Ascending aorta (tissue), 2 donors: ENCODE measurements at regions of chr6 and their contacts with region 1.

Region 1: DNA sequence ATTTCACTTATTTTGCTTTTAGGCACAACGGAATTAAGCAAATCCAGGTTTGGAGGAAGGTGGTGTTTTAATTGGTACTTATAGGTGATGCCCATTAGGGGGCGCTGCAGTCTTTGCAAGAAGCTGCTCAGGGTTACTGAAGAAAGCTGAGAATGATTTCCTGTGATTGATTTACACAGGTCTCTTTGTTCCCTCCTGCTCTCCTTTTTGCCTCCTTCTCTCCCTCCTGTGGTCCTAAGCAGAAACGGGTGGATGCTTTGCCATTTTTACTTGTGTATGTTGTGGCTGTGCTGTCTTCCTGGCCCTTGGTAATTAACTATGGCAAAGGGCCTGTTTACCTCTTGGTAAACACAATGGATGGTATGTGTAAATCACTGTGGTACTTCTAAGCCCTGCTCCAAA is 97.8 kb downstream of the ANKS1A start:
- DNase-seq: peak in 1 of 2 donors; percentile 84
- H3K4me3 ChIP-seq: no peak overlapping the region
- H3K27ac ChIP-seq: peak overlapping the region in 1 of 2 donors; percentile 60
- H3K4me1 ChIP-seq: peaks cover 5 to 6% of the 10 kb centered on the region in 2 donors
- H3K27me3 ChIP-seq: no peaks in the 10 kb centered on the region
- CTCF ChIP-seq: peak; percentile 73 to 88 (median 81)

Region 2: GRCh38 chr6:34514593-34515472 is 472.0 kb before region 1 on chr6:
- intact Hi-C with region 1: no loop called
- DNase-seq: no peak
- H3K4me3 ChIP-seq: no peak overlapping the region
- H3K27ac ChIP-seq: no peak overlapping the region
- H3K4me1 ChIP-seq: no peaks in the 10 kb centered on the region
- H3K27me3 ChIP-seq: no peaks in the 10 kb centered on the region
- CTCF ChIP-seq: no peak

Region 3: GRCh38 chr6:35048631-35049083 is 61.8 kb after region 1 on chr6:
- intact Hi-C with region 1: loop called (anchors 1 kb)
- DNase-seq: peak in 1 of 2 donors; percentile 40
- H3K4me3 ChIP-seq: peak overlapping the region; percentile 23 to 31
- H3K27ac ChIP-seq: peak overlapping the region; percentile 87 to 89
- H3K4me1 ChIP-seq: peaks cover 59 to 93% of the 10 kb centered on the region in 2 donors
- H3K27me3 ChIP-seq: no peaks in the 10 kb centered on the region
- CTCF ChIP-seq: peak in 2 of 3 experiments; percentile 30 to 56

Region 4: DNA sequence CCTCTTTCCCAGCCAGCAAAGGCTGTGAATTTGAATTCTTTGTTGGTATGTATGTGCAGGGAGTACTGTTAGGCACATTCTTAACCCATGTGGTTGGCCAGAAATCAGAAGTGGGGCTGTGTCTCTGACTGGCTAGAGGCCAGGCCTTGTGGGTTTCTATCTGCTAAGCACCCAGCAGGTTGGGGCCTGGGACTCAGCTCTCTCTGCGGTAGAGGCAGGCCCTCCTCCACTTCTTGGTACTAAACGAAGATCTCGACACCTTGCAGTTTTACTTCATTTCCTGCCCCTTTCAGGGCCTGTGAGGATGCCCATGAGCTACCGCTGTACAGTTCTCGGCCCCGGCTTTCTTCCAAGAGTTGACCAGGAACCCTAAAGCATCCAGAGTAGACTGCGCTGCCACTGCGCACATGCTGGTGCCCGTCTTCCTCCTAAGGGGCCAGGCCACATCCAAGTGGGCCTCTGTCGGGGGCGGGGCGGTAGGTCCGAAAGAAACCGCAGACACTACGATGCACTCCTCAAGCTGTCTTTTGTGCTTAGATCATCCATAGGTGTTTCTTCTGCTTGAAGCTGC is 103.2 kb after region 1 on chr6:
- intact Hi-C with region 1: loop called (anchors 5 kb)
- DNase-seq: peak in 1 of 2 donors; percentile 78
- H3K4me3 ChIP-seq: no peak overlapping the region
- H3K27ac ChIP-seq: peak overlapping the region; percentile 74 to 78
- H3K4me1 ChIP-seq: peaks cover 29 to 63% of the 10 kb centered on the region in 2 donors
- H3K27me3 ChIP-seq: no peaks in the 10 kb centered on the region
- CTCF ChIP-seq: no peak

Region 5: DNA sequence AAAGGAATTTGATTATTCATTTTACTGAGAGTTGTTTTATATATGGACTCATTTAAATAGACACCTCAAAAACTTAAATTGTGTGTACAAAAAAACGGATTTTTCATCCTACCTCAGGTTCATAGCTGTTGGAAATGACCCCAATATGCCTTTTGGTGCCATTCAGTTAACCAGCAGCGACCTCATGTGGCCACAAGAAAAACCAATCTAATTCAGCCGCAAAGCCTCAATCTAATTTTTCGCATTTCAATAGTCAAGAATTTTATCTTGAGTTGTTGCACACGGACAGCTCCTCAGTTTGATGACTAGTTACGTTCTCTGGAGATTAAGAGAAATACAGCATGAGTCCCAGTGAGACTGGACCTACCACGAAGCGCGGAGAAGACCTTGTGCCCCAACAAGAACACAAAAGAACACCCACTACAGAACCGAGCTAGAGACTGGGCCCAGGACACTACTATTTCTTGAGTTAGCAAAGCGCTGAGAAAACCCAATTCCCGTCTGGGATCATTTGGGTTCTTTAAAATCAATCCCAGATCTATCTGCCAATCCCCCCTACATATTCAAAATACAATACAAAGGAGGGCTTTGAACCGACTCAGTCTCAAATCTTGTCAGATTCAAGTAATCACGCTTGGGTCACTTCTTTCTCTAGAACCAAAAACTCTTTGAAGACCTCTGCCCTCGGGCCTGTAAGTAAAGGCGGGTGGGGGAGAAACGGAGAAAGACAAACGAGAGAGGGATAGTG is 153.2 kb after region 1 on chr6:
- intact Hi-C with region 1: loop called (anchors 1 kb)
- DNase-seq: no peak
- H3K4me3 ChIP-seq: no peak overlapping the region
- H3K27ac ChIP-seq: no peak overlapping the region
- H3K4me1 ChIP-seq: peaks cover 0 to 4% of the 10 kb centered on the region in 2 donors
- H3K27me3 ChIP-seq: no peaks in the 10 kb centered on the region
- CTCF ChIP-seq: peak; percentile 75 to 87 (median 84)

Region 6: GRCh38 chr6:35209081-35209480 is 222.2 kb after region 1 on chr6:
- intact Hi-C with region 1: loop called (anchors 5 kb)
- DNase-seq: no peak
- H3K4me3 ChIP-seq: no peak overlapping the region
- H3K27ac ChIP-seq: no peak overlapping the region
- H3K4me1 ChIP-seq: peaks cover 5 to 6% of the 10 kb centered on the region in 2 donors
- H3K27me3 ChIP-seq: no peaks in the 10 kb centered on the region
- CTCF ChIP-seq: no peak

Region 7: GRCh38 chr6:35240840-35241801 is 254.3 kb after region 1 on chr6:
- intact Hi-C with region 1: loop called (anchors 2 kb)
- DNase-seq: peak in 1 of 2 donors; percentile 86
- H3K4me3 ChIP-seq: no peak overlapping the region
- H3K27ac ChIP-seq: peak overlapping the region; percentile 78 to 89
- H3K4me1 ChIP-seq: peaks cover 8 to 24% of the 10 kb centered on the region in 2 donors
- H3K27me3 ChIP-seq: no peaks in the 10 kb centered on the region
- CTCF ChIP-seq: peak; percentile 91 to 96 (median 93)